BJ (cell line): ENCODE measurements at regions of chr12 and their contacts with region 1.

Region 1: DNA sequence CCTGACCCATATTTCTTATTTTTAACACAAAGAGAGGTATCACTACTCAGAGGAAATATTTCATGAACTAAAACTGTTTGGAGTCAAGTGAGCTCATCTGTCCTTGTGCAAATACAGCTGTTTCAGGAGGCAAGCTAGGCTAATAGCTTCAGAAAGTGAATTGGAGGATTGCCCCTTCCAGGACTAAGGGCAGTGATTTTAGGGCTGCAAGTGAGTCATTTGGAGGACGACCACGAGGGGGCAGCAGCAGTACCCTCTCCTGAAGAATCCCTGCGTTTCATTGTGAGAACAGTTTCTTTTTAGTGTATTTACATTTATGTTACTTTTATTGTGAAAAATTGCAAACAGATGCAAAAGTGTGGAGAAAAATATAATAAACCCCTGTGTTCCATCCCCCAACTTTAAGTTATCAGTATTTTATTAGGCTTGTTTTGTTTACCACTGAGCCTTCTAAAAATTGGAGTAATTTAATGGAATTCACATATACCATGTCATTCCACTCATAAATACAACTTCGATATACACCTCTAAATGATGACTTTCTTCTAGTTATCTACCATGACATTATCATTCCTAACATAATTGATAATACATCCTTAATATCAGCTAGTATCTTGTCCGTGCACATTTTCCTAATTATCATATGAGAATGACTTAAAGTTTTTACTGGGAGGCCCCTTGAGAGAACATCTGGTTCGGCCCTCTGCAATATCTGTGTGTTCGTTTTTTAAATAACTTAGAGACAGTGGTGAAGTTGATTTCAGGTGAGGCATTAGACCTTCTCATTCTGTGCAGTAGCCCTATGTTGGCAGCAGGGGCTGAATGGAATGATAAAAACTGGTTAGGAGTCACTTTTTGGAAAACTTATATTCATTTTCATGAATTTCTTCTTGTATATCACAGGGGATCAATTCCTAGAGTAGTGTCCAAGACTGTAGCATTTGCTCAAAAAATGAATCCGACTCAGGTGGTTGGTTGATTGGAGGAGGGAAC is 13.7 kb downstream of the FOXJ2 start:
- DNase-seq: no peak
- H3K4me3 ChIP-seq: no peak overlapping the region
- H3K27me3 ChIP-seq: no peaks in the 10 kb centered on the region
- CTCF ChIP-seq: peak; percentile 89

Region 2: DNA sequence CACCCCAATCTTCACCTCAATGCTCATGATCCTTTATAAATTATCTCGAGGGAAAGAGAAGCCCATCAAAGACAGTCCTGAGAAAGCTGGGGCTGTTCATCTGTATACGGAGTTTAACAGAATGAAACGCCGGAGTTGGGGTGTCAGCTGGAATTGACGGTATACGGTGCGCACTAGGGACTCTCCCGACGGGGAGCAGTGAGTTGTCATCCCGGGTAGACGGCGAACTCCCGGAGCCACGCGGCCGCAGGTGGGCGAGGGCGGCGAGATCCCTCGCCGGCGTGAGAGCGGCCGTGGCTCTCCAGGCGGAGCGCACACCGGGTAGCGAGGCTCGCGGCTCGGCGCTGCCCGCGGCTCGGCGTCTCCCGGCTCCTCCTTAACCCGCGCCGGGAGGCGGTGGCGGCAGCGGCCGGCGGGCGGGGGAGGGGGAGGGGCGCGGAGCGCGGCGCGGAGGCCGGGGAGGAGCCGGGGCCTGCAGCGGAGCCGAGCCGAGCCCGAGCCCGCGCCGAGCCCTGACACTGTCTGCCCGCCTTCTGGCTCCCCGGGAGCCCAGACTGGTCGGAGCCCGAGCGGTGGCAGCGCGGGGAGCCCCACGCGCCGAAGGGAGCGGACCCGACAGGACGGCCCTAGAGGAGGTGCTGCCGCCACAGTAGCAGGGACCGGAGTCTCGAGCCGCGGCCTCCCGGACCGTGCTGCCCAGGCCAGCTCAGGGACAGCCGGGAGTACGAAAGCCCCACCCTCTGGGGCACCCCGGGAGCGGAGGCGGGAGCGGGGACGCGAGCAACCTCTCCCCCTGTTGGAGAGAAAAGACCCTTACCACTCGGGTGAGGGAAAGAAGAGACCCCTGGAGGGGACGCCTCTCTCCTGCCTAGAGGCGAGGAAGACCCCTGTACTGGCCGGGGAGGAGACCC is 13.8 kb before region 1 on chr12 and contains the start of gene FOXJ2:
- CTCF ChIA-PET with region 1: interaction called, 11 read pairs
- POLR2A ChIA-PET with region 1: no interaction called
- DNase-seq: no peak
- H3K4me3 ChIP-seq: peak within 1 kb of the TSS; percentile 85
- H3K27me3 ChIP-seq: no peaks in the 10 kb centered on the region
- CTCF ChIP-seq: peak; percentile 20; the same call in 1 of the 2 replicates
- polyA plus RNA-seq, gene FOXJ2: 5.3 and 6.5 TPM in 2 replicates

Region 3: GRCh38 chr12:8057306-8057705 is 11.1 kb after region 1 on chr12:
- CTCF ChIA-PET with region 1: interaction called, 10 read pairs
- POLR2A ChIA-PET with region 1: no interaction called
- DNase-seq: no peak
- H3K4me3 ChIP-seq: no peak overlapping the region
- H3K27me3 ChIP-seq: no peaks in the 10 kb centered on the region
- CTCF ChIP-seq: no peak

Region 4: GRCh38 chr12:8078398-8078797 is 32.1 kb after region 1 on chr12:
- CTCF ChIA-PET with region 1: interaction called, 75 read pairs
- POLR2A ChIA-PET with region 1: no interaction called
- DNase-seq: no peak
- H3K4me3 ChIP-seq: no peak overlapping the region
- H3K27me3 ChIP-seq: no peaks in the 10 kb centered on the region
- CTCF ChIP-seq: peak; percentile 60